Astrocyte of the cerebellum (primary cell): ENCODE measurements at regions of chr2 and their contacts with region 1.

Region 1: DNA sequence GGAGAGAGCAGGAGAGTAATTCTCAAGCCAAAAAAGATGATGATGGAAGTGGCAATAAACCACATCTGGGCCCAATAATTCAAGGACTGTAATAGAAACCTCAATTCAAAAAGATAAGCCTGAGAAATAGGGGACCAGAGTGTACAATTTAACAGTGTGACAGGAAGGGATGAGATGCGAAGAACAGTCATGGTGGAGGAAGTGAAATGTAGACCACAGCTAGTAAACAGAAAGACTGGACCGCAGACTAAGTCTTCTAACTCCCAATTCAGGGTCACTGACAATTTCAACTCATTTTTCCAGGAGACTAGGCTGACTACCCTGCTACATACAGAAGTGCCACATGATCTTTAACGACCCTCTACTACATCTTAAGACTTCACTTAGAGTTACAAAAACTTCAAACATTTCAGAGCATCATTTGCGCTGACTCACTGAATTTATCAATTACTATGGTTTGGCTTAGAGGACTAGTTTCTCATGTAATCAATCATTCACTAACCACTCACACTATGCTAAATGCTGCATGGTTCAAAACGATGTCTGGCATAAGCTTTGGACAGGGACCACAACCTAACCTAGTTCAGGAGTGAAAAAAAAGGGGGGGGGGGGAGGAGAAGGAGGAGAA is 9.0 kb downstream of the CUL3 start:
- DNase-seq: no peak
- H3K4me3 ChIP-seq: no peak overlapping the region
- CTCF ChIP-seq: no peak

Region 2: GRCh38 chr2:224492531-224492930 is 83.7 kb before region 1 on chr2:
- in situ Hi-C with region 1: loop called (anchors 5 kb)
- DNase-seq: no peak
- H3K4me3 ChIP-seq: no peak overlapping the region
- CTCF ChIP-seq: no peak

Region 3: DNA sequence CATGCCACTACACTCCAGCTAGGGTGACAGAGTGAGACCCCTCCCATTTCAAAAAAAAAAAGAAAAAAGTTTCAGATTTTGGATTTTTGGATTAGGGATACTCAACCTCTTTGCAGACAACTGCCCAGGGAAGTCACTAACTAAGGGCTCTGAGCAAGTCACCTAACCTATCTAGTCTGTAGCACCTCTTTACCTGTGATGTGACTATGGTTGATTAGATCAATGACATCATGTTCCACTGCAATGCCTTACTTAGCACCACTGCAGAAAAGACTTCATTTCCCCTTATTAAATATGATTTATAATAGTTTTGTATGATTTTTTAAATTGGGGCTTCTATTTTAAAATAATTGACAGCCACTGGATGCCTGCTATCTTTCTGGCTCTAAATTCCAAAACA is 32.3 kb before region 1 on chr2:
- in situ Hi-C with region 1: loop called (anchors 5 kb)
- DNase-seq: no peak
- H3K4me3 ChIP-seq: no peak overlapping the region
- CTCF ChIP-seq: no peak